Activated CD4-positive, alpha-beta T cell treated with anti-CD3 and anti-CD28 coated beads for 36 hours (primary cell): ENCODE measurements at regions of chr2 and their contacts with region 1.

Region 1: GRCh38 chr2:209577376-209578357 is 153.8 kb downstream of the MAP2 start:
- DNase-seq: no peak
- ATAC-seq: no peak
- H3K4me3 Mint-ChIP-seq: no peak overlapping the region
- H3K27ac Mint-ChIP-seq: no peak overlapping the region
- H3K4me1 Mint-ChIP-seq: peaks cover 6% of the 10 kb centered on the region
- H3K27me3 Mint-ChIP-seq: peaks cover 2% of the 10 kb centered on the region

Region 2: DNA sequence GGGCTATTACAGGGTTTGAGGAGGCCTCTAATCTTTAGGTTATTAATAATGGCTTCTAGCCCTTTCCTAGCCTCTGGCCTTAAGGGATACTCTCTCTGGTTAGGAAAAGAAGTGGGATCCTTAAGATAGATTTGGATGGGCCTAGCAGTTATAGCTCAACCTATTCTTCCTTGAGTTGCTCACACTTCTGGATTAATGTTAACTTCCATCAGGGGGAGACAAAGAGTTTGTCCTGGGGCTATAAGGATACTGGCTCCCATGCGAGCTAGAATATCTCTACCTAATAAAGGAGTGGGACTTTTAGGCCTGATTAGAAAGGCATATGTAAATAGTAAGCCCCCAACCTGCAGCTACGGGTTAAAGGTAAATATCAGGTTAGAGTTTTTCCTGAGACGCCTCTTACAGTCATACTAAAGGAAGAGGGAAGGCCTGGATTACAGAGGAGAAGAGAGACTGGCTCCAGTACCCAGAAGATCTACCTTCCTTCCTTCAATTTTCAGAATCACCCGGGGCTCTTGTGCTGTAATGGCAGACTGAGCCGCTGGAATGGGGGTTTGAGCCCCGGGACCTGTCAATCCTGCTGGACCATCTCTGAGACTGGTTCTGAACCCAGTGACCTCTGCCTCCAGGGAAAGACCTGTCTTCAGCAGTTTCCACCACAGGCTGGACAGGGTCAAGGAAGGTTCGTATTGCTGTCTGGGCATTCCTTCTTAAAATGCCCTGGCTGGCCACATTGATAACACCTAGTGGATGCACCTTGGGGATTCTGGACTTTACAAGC is 1185.2 kb before region 1 on chr2:
- CTCF ChIA-PET with region 1: no interaction called
- POLR2A ChIA-PET with region 1: no interaction called
- intact Hi-C with region 1: loop called in 1 of 2 experiments (anchors 10 kb)
- DNase-seq: no peak
- ATAC-seq: no peak
- H3K4me3 Mint-ChIP-seq: no peak overlapping the region
- H3K27ac Mint-ChIP-seq: no peak overlapping the region
- H3K4me1 Mint-ChIP-seq: no peaks in the 10 kb centered on the region
- H3K27me3 Mint-ChIP-seq: peaks cover 6% of the 10 kb centered on the region

Region 3: GRCh38 chr2:208466151-208466919 is 1111.3 kb before region 1 on chr2:
- CTCF ChIA-PET with region 1: no interaction called
- POLR2A ChIA-PET with region 1: no interaction called
- intact Hi-C with region 1: loop called in 1 of 2 experiments (anchors 10 kb)
- DNase-seq: peak; percentile 36
- ATAC-seq: no peak
- H3K4me3 Mint-ChIP-seq: no peak overlapping the region
- H3K27ac Mint-ChIP-seq: no peak overlapping the region
- H3K4me1 Mint-ChIP-seq: no peaks in the 10 kb centered on the region
- H3K27me3 Mint-ChIP-seq: peaks cover 9% of the 10 kb centered on the region

Region 4: GRCh38 chr2:209423562-209424198 is 154.0 kb before region 1 on chr2 and contains the start of gene MAP2:
- CTCF ChIA-PET with region 1: no interaction called
- POLR2A ChIA-PET with region 1: no interaction called
- intact Hi-C with region 1: loop called (anchors 2 to 5 kb)
- DNase-seq: peak; percentile 87
- ATAC-seq: peak; percentile 98
- H3K4me3 Mint-ChIP-seq: peak within 1 kb of the TSS; percentile 67
- H3K27ac Mint-ChIP-seq: no peak within 1 kb of the TSS
- H3K4me1 Mint-ChIP-seq: peaks cover 10% of the 10 kb centered on the region
- H3K27me3 Mint-ChIP-seq: peaks cover 32% of the 10 kb centered on the region
- total RNA-seq, gene MAP2: 0.34 to 0.39 TPM

Region 5: DNA sequence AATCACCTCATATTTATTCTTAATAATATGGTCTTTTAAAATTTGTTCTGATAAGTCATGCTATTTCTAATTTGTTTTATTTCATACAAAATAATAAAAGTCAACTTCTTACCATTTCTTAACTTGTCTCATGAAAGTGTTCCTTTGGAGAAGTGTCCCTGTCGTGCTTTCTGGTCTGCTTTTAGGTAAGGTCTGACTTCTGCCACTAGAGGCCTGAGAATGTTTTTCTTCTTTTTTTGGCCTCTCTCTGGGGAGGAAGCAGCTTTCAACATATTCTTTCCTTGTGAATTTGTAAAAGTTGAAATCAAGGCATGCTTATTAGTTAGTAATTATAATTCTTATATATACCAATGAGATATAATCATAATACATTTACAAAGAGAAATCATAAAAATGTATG is 114.4 kb before region 1 on chr2:
- CTCF ChIA-PET with region 1: no interaction called
- POLR2A ChIA-PET with region 1: no interaction called
- intact Hi-C with region 1: no loop called
- DNase-seq: no peak
- ATAC-seq: no peak
- H3K4me3 Mint-ChIP-seq: no peak overlapping the region
- H3K27ac Mint-ChIP-seq: no peak overlapping the region
- H3K4me1 Mint-ChIP-seq: no peaks in the 10 kb centered on the region
- H3K27me3 Mint-ChIP-seq: no peaks in the 10 kb centered on the region

Region 6: DNA sequence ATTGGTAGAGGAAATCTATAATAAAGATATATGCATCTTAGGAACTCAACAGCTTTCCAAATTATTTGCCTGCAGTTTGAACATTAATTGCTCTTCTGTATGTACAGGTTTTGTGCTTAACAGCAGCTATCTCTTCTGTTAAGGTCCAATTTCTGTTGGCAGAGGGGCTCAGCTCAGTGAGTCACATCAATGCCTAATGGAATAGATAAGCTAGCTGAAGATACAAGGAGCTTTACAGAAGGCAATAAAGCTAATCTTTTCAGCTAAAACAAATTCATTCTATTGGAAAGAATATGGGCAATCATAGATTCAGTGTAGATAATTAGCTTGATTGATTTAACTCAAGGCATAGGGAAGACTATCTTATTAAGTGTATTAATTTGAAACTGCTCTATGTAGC is 135.6 kb after region 1 on chr2:
- CTCF ChIA-PET with region 1: no interaction called
- POLR2A ChIA-PET with region 1: no interaction called
- intact Hi-C with region 1: no loop called
- DNase-seq: no peak
- ATAC-seq: no peak
- H3K4me3 Mint-ChIP-seq: no peak overlapping the region
- H3K27ac Mint-ChIP-seq: no peak overlapping the region
- H3K4me1 Mint-ChIP-seq: no peaks in the 10 kb centered on the region
- H3K27me3 Mint-ChIP-seq: no peaks in the 10 kb centered on the region

Region 7: GRCh38 chr2:210203157-210203947 is 625.7 kb after region 1 on chr2:
- CTCF ChIA-PET with region 1: no interaction called
- POLR2A ChIA-PET with region 1: no interaction called
- intact Hi-C with region 1: loop called in 1 of 2 experiments (anchors 5 kb)
- DNase-seq: no peak
- ATAC-seq: no peak
- H3K4me3 Mint-ChIP-seq: no peak overlapping the region
- H3K27ac Mint-ChIP-seq: no peak overlapping the region
- H3K4me1 Mint-ChIP-seq: no peaks in the 10 kb centered on the region
- H3K27me3 Mint-ChIP-seq: peaks cover 8% of the 10 kb centered on the region